Activated CD8-positive, alpha-beta memory T cell treated with anti-CD3 and anti-CD28 coated beads, Interleukin-2, amount 10 ng/mL, durations not matched to agents 7 days and 5 days (primary cell): ENCODE measurements at regions of chr14 and their contacts with region 1.

Region 1: GRCh38 chr14:89430391-89431236 is 13.6 kb upstream of the FOXN3 start:
- DNase-seq: peak; percentile 74
- ATAC-seq: peak; percentile 78
- H3K4me3 Mint-ChIP-seq: peak overlapping the region; percentile 76
- H3K27ac Mint-ChIP-seq: peak overlapping the region; percentile 99
- H3K4me1 Mint-ChIP-seq: peaks cover 64% of the 10 kb centered on the region
- H3K27me3 Mint-ChIP-seq: no peaks in the 10 kb centered on the region

Region 2: GRCh38 chr14:89417469-89418225 is 13.0 kb before region 1 on chr14:
- CTCF ChIA-PET with region 1: interaction called, 17 read pairs
- DNase-seq: peak; percentile 84
- ATAC-seq: peak; percentile 54
- H3K4me3 Mint-ChIP-seq: peak overlapping the region; percentile 89
- H3K27ac Mint-ChIP-seq: peak overlapping the region; percentile 96
- H3K4me1 Mint-ChIP-seq: peaks cover 39% of the 10 kb centered on the region
- H3K27me3 Mint-ChIP-seq: no peaks in the 10 kb centered on the region

Region 3: DNA sequence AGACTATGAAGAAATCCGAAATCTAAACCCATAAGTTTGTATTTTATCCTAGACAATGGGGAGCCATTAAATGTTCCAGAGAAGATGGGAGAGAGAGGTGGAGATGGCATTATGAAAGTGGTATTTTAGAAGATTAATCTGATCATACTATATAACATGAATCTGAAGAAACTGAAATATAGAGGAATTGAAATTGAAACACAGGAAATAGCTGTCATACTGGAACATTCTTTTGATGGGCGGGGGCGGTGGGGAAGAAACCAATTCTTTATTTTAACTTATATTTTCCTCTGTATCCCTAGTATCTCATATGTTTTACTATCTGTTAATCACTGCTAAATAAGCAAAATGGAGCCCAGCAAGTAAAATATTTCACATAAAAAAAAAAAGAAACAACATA is 13.4 kb after region 1 on chr14:
- CTCF ChIA-PET with region 1: interaction called, 11 read pairs
- DNase-seq: no peak
- ATAC-seq: no peak
- H3K4me3 Mint-ChIP-seq: no peak overlapping the region
- H3K27ac Mint-ChIP-seq: peak overlapping the region; percentile 80
- H3K4me1 Mint-ChIP-seq: peaks cover 40% of the 10 kb centered on the region
- H3K27me3 Mint-ChIP-seq: no peaks in the 10 kb centered on the region